GM23248 (cell line): ENCODE measurements at regions of chr20 and their contacts with region 1.

Region 1: GRCh38 chr20:61841966-61842365 is 223.7 kb downstream of the TAF4 start:
- DNase-seq: peak; percentile 27
- H3K4me3 ChIP-seq: no peak overlapping the region
- H3K27ac ChIP-seq: no peak overlapping the region
- H3K4me1 ChIP-seq: no peaks in the 10 kb centered on the region
- H3K27me3 ChIP-seq: no peaks in the 10 kb centered on the region; the same call in 1 of the 2 replicates

Region 2: GRCh38 chr20:61786230-61786629 is 55.7 kb before region 1 on chr20:
- in situ Hi-C with region 1: loop called (anchors 10 kb)
- DNase-seq: no peak
- H3K4me3 ChIP-seq: no peak overlapping the region
- H3K27ac ChIP-seq: no peak overlapping the region
- H3K4me1 ChIP-seq: no peaks in the 10 kb centered on the region
- H3K27me3 ChIP-seq: no peaks in the 10 kb centered on the region; the same call in 1 of the 2 replicates

Region 3: DNA sequence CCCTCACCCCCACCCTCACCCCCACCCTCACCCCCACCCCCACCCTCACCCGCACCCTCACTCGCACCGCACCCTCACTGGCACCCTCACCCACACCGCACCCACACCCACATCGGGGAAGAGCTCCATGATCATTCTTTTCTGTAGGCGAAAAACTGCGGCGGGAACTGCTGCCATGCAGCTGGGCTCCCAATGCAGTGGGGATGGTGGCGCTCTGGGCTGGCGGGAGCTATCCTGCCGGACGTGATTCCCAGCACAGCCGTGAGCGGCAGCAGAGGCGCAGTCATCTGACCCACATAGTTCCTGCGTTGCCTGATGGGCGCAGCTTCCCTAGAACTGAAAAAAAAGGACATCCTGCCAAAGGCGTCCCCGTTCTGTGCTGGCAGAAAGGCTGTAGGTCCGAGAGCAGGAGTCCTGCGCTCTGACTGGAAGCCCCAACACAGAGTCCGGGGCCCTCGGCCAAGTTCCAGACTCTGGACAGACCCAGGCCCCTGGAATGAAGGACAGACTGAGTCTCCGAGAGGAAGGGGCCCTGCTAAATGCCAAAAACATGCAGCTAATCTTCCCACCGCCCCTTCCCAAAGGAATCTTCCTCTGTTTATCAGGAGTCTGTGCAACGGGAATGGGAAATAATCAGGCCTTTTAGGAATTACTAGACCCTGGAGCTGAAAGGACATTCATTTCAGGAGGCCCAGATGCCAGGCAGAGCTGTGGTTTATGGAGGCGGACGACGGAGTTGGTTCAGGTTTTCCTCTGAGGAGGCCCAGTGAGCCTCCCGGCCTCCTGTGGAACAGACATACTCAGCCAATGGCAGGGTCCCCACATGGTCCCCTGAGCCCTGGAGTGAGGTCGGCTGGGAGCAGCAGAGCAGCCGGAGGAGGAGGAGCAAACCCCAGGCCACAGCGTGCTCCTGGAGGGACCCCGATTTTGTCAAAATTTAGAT is 1033.7 kb after region 1 on chr20:
- in situ Hi-C with region 1: no loop called
- DNase-seq: peak; percentile 93
- H3K4me3 ChIP-seq: no peak overlapping the region
- H3K27ac ChIP-seq: peak overlapping the region; percentile 70
- H3K4me1 ChIP-seq: no peaks in the 10 kb centered on the region
- H3K27me3 ChIP-seq: no peaks in the 10 kb centered on the region